ENCODE measurements at regions of chr7 and their contacts with region 1.

Region 1: DNA sequence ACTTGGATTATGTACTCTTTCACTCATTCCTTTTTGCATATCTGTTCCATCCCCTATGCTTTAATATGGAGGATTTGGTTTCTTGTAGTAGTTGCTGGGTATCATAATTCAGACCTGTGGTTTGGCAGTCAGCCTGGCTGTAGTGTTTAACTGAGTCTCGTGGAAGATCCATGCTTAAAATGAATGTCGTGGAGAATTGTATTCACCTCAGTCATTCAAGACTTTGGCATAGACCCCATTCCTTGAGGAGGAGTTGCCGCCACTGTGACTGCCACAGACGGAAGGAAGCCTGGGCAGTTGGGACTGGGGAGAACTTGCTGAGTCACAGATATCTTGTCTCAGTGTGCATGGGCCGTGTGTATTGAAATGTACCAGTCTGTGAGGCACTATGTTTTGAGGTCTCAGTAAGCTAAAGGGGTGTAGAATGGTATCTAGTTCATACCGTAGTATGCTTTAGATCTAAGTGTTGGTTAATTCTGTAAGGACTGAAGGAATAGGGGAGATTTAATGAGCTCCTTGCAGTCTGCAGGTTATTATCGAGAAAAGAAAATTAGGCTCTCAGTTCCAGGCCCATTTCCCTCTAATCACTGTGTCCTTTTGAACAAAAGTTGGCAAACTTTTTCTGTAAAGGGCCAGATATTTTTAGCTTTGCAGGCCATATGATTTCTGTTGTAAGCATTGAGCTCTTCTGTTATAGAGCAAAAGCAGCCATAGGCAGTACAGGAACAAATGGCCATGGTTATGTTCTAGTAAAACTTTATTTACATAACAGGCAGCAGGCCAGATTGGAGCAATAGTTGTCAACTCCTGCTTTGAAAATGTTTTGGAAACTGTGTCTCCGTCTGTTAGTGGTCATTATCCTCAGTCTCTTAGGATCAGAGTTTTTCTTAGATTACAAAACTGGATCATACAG is 76.8 kb downstream of the TPST1 start:
- DNase-seq: peak in 1 of 2 experiments; percentile 51
- H3K4me3 ChIP-seq: no peak overlapping the region
- H3K27ac ChIP-seq: no peak overlapping the region
- H3K4me1 ChIP-seq: peaks cover 15% of the 10 kb centered on the region
- H3K27me3 ChIP-seq: no peaks in the 10 kb centered on the region
- CTCF ChIP-seq: no peak

Region 2: DNA sequence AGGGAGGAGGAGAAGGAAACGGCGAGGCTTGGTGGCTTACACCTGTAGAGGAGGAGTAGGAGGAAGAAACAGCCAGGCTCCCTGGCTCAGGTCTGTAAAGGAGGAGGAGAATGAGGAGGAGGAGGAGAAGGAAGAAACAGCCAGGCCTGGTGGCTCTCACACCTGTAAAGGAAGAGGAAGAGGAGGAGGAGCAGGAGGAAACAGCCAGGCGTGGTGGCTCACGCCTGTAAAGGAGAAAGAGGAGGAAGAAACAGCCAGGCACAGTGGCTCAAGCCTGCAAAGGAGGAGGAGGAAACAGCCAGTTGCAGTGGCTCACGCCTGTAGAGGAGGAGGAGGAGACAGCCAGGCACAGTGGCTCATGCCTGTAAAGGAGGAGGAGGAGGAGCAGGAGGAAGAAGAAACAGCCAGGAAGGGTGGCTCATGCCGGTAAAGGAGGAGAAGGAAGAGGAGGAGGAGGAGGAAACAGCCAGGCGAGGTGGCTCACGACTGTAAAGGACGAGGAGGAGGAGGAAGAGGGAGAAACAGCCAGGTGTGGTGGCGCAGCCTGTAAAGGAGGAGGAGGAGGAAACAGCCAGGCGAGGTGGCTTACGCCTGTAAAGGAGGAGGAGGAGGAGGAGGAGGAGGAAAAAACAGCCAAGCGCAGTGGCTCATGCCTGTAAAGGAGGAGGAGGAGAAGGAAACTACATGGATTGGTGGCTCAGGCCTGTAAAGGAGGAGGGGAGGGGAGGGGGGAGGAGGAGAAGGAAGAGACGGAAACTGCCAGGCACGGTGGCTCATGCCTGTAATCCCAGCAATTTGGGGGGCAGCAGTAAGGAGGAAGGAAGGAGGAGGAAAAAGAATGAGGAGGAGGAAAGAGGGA is 182.1 kb before region 1 on chr7:
- CTCF ChIA-PET with region 1: interaction called, 11 read pairs
- POLR2A ChIA-PET with region 1: no interaction called
- intact Hi-C with region 1: no loop called
- DNase-seq: peak; percentile 85 to 89
- H3K4me3 ChIP-seq: peak overlapping the region; percentile 49; the same call in 1 of the 2 replicates
- H3K27ac ChIP-seq: peak overlapping the region; percentile 66
- H3K4me1 ChIP-seq: peaks cover 10% of the 10 kb centered on the region
- H3K27me3 ChIP-seq: no peaks in the 10 kb centered on the region
- CTCF ChIP-seq: no peak

Measured in PC-9 (cell line).